A549 (cell line): ENCODE measurements at regions of chr10 and their contacts with region 1.

Region 1: GRCh38 chr10:63157845-63158624 is 24.9 kb downstream of the NRBF2 start:
- DNase-seq: peak; percentile 57 to 92
- ATAC-seq: peak; percentile 80 to 88
- H3K4me3 ChIP-seq: no peak overlapping the region
- H3K27ac ChIP-seq: no peak overlapping the region
- H3K4me1 ChIP-seq: no peaks in the 10 kb centered on the region
- CTCF ChIP-seq: peak; percentile 85
- EP300 ChIP-seq: no peak
- POLR2A ChIP-seq: no peak
- RAD21 ChIP-seq: peak; percentile 89 to 91

Region 2: DNA sequence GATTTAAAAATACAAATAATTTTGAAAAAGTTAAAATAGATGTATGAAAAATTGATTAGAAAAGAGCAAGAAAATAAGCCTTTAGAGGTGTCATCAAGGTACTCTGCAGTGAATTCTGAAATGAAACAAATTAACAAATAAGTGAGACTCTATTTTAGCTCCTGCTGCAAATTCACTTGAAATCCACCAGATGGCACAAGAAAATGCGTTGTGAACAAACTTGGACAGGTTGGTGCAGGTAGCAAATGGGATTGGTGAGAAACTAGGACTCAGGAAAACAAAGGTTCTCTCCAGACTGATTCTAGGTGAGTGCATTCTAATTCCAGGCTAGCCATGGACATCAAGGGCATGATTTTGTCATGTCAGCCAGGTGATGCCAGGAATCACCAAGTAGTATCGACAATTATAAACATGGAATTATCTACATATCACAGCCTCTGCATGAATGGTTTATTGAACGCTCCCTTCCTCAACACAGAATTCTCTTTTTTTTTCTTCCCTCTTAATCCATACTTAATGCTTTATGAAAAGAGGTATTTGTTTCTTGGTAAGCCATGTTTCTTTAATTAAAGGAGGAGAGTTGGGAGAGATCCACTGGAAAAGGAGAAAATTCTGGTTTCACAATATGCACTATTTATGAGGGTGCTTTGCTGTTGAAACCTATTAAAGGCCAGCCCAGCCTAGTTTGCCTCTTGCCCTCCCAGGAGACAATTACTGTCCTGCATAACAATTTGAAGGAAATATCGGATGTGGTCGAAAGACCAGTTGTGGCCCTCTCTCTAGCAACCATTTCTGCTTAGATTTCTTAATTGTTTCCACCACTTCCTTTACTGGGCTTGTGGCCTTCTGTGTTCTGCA is 665.8 kb before region 1 on chr10:
- CTCF ChIA-PET with region 1: interaction called, 12 read pairs
- POLR2A ChIA-PET with region 1: no interaction called
- DNase-seq: peak in 1 of 2 experiments; percentile 57
- ATAC-seq: peak; percentile 56 to 65; a peak in 4 of 6 replicates
- H3K4me3 ChIP-seq: no peak overlapping the region
- H3K27ac ChIP-seq: no peak overlapping the region
- H3K4me1 ChIP-seq: no peaks in the 10 kb centered on the region
- CTCF ChIP-seq: peak; percentile 52
- EP300 ChIP-seq: no peak
- POLR2A ChIP-seq: no peak
- RAD21 ChIP-seq: peak; percentile 60 to 62; a peak in 4 of 5 replicates

Region 3: DNA sequence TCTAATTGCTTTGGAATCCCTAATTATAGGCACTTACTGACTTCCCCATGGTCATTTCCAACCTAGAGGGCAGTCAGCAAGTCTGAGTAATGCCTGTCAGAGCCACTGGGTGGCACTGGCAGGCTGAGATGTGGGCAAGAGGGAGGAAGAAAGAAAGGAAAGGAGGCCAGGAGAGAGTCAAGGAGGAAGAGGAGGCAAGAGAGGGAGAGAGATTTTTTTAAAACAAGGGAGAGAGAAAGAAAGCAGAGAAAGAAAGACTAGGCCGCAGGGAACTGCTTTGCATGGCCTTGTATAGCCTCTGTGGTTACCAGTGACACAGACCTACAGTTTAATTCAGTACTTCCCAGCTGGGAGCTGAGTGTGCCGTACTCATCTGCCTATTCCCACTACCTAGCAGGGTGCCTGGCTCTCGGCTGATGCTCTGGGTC is 563.9 kb before region 1 on chr10:
- CTCF ChIA-PET with region 1: interaction called, 42 read pairs
- POLR2A ChIA-PET with region 1: no interaction called
- DNase-seq: peak; percentile 26 to 58
- ATAC-seq: peak; percentile 94 to 98
- H3K4me3 ChIP-seq: no peak overlapping the region
- H3K27ac ChIP-seq: no peak overlapping the region
- H3K4me1 ChIP-seq: no peaks in the 10 kb centered on the region
- CTCF ChIP-seq: peak; percentile 84
- EP300 ChIP-seq: no peak
- POLR2A ChIP-seq: no peak
- RAD21 ChIP-seq: peak; percentile 88 to 96

Region 4: DNA sequence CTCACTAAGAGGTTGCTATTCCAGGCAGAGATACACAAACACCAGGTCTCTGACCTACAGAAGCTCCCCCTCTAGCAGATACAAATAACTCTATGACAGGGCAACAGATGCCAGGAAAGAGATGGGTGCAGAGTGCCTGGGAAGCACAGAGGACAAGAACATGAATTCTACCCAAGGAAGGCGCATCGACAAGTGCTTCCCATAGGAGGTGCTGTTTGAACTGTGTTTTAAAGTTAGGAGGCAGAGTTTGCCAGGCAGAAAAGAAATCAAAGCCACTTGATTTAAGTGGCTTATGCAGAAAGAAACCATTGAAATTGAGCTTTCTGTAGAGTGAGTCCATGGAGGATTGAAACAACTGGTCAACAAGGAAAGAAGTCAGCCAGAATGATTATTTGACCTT is 306.6 kb before region 1 on chr10:
- CTCF ChIA-PET with region 1: no interaction called
- POLR2A ChIA-PET with region 1: no interaction called
- DNase-seq: peak in 1 of 2 experiments; percentile 16
- ATAC-seq: no peak
- H3K4me3 ChIP-seq: no peak overlapping the region
- H3K27ac ChIP-seq: no peak overlapping the region
- H3K4me1 ChIP-seq: no peaks in the 10 kb centered on the region
- CTCF ChIP-seq: 0 out of 3 replicates have a peak, but pooled peaks have one; percentile 7
- EP300 ChIP-seq: no peak
- POLR2A ChIP-seq: no peak
- RAD21 ChIP-seq: no peak

Region 5: DNA sequence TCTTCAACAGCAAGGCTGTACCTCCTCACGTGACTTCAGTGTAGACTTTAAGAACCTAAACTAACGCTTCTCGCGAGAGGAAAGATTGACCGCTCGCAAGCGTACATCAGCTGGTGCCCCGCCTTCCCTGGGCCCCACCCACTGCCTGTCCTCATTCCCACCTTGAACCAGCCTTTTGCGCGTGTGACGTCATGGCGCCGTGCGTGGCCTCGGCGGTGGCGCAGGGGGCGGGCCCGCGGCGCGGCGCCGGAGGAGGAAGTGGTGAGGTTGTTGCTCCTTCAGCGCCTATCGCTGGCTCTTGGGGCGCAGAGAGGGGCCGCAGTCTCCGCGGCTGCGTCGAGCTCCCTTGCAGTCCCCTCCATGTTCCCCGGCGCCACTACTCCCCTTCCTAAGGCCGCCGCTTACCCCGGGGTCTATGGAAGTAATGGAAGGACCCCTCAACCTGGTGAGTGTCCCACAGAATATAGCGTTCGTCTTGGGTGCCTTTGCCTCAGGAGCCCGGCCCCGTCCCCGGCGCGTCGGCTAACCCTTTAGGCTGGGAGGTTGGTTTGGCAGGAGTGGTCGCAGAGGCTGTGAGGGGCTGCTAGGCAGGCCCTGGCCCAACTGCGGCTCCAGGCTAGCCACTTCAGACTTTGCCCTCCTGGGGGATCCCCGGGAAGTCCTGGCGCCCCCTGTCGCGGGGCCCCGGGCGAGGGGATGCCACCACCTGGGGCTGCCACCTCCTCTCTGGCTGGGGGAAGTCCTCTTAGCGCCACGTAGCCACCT is 24.8 kb before region 1 on chr10 and contains the start of gene NRBF2:
- CTCF ChIA-PET with region 1: interaction called, 15 read pairs
- POLR2A ChIA-PET with region 1: no interaction called
- DNase-seq: peak; percentile 87 to 99
- ATAC-seq: peak; percentile 98 to 99
- H3K4me3 ChIP-seq: peak within 1 kb of the TSS; percentile 82
- H3K27ac ChIP-seq: peak within 1 kb of the TSS; percentile 89 to 93
- H3K4me1 ChIP-seq: peaks cover 9% of the 10 kb centered on the region; the same call in 2 of the 3 replicates
- CTCF ChIP-seq: peak; percentile 30
- EP300 ChIP-seq: no peak
- POLR2A ChIP-seq: peak; percentile 96
- RAD21 ChIP-seq: no peak
- polyA plus RNA-seq, gene NRBF2: 23.3 and 27.6 TPM in 2 replicates

Region 6: GRCh38 chr10:63140077-63140476 is 18.0 kb before region 1 on chr10:
- CTCF ChIA-PET with region 1: interaction called, 30 read pairs
- POLR2A ChIA-PET with region 1: no interaction called
- DNase-seq: no peak
- ATAC-seq: no peak
- H3K4me3 ChIP-seq: no peak overlapping the region
- H3K27ac ChIP-seq: no peak overlapping the region
- H3K4me1 ChIP-seq: no peaks in the 10 kb centered on the region
- CTCF ChIP-seq: no peak
- EP300 ChIP-seq: no peak
- POLR2A ChIP-seq: no peak
- RAD21 ChIP-seq: no peak

Region 7: DNA sequence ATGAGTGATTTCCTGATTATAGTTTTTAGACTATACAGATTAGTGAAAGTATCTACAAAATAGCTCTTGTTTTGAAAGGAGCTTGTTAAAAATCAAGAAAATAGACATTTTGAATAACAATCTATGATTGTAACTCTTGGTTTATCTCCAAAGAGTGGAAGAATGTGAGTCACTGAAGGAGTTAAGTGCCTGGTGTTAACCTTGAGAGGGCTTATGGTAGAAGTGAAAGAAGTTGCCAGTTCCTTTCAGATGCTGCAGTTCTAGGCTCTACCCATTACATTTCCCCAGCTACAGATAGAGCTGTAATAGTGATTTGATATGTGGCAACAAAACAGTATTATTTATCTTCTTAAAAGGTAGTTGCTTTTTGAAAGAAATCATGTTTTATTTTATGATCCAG is 12.3 kb before region 1 on chr10:
- CTCF ChIA-PET with region 1: interaction called, 30 read pairs
- POLR2A ChIA-PET with region 1: no interaction called
- DNase-seq: no peak
- ATAC-seq: no peak
- H3K4me3 ChIP-seq: no peak overlapping the region
- H3K27ac ChIP-seq: no peak overlapping the region
- H3K4me1 ChIP-seq: no peaks in the 10 kb centered on the region
- CTCF ChIP-seq: no peak
- EP300 ChIP-seq: no peak
- POLR2A ChIP-seq: no peak
- RAD21 ChIP-seq: no peak

Region 8: DNA sequence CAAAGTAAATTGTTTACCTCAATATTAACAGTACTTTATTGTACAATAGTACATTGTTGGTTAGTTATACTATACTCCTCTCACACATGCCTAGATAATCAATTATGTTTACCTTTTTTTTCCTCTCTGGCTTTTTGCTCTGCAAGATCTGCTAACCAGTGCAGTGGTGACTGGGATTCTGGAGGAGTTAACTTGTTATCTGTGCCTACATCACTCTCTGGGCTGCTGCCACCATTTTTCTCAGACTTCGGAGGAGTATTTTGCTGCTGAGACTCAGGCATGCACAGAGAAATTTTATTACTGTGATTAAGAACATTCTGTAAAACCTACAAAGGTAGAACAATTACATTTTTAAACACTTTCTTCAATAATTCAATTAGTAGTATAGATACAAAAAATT is 34.8 kb after region 1 on chr10:
- CTCF ChIA-PET with region 1: no interaction called
- POLR2A ChIA-PET with region 1: no interaction called
- DNase-seq: no peak
- ATAC-seq: no peak
- H3K4me3 ChIP-seq: no peak overlapping the region
- H3K27ac ChIP-seq: no peak overlapping the region
- H3K4me1 ChIP-seq: no peaks in the 10 kb centered on the region
- CTCF ChIP-seq: no peak
- EP300 ChIP-seq: no peak
- POLR2A ChIP-seq: no peak
- RAD21 ChIP-seq: no peak